Aorta (tissue), 5 donors: ENCODE measurements at regions of chr1 and their contacts with region 1.

Region 1: DNA sequence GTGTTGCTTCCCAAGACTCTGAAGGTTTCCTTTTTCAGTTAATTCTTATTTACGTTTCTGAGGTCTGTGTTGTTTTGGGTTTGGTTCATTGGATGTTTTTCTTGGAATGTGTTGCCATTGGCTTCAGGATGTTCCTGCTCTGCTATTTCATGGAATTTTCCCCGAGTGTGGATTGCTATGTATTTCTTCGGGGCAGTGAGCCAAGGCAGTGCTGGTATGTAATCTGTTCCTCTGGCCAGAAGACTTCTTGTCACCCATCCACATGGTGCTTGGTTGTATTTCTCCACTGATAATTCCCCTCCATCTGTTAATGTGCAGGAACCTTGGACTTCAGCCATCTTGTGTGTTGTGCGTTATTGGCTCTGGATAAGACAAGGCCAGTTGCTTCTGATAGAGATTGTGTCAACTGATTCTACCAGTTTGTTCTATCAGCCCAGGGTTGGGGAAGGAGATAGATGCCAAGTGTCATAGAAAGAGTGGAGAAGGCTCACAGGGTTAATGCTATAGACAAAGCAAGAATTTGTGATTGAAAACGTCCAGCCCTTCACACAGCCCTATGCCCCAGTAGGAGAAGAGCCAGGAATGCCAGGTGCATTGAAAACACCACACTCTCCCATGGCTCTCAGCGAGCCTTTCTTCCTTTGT is 505.2 kb downstream of the PLPP3 start:
- DNase-seq: peak; percentile 85 to 88
- ATAC-seq: peak; percentile 88
- H3K4me3 ChIP-seq: no peak overlapping the region
- H3K27ac ChIP-seq: peak overlapping the region; percentile 57 to 80
- H3K4me1 ChIP-seq: peaks cover 6 to 17% of the 10 kb centered on the region in 2 donors
- H3K27me3 ChIP-seq: no peaks in the 10 kb centered on the region

Region 2: DNA sequence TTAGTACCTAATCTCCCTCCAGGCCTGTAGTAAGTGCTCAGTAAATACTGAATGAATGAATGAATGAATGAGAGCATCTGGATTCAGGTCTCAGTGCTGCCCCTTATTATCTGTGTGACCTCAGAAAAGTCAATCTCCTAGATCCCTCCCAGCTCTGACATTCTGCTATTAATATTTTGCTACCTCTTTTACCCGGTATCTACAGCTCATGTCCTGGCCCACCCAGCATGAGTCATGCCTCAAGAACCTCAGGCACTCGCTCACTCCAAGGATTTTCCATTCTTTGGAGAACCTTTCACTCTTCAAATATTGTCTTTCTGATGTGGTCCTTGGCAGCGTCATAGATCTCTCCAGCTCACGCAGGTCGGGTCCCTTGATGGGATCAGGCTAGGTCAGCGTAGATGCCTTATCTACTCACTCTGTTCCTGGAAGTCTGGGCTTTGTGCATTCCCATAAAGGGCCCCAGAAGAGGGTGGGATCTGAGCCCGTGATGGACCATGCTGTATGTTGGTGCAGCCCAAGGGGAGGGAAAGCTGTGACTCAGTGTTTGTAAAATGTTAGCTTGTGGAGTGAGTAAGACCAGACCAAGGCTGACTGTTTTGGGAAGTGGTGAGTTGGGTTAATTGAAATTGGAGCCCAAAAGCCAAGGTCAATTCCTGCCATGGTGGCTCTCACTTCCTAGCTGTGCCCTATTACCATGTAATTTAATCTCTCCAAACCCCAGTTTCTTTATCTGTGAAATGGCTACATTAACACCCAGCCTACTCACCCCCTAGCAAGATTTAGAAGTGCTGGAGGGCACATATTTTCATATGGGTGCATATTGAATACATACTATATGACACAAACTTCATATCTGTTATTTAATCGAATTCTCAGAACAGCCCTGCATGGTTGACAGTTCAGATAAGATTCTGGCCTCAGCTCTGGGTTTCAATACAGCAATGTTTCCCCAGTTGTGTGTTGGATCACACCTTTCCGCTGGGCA is 644.9 kb before region 1 on chr1:
- intact Hi-C with region 1: loop called in 1 of 2 experiments (anchors 5 kb)
- DNase-seq: peak; percentile 89
- ATAC-seq: peak; percentile 90
- H3K4me3 ChIP-seq: no peak overlapping the region
- H3K27ac ChIP-seq: peak overlapping the region; percentile 71 to 88
- H3K4me1 ChIP-seq: peaks cover 2 to 7% of the 10 kb centered on the region in 2 donors
- H3K27me3 ChIP-seq: no peaks in the 10 kb centered on the region

Region 3: DNA sequence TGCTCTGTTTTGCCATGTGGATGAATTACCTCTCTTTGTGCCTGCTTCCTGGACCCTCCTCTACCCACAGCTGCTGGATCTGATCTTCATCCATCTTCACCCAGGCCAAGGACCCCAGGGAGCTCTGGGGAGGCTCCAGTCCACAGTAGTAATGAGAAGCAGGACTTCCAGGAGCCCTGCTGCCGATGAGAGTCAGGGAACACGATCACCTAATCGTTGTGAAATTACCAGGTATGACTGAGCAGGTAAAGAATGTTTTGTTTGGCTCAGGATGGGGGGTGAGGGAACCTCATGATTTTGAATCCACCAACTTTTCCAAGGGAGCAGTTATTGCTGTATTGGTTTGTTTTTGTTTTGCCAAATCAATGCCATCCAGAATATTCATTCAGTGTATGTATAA is 51.2 kb after region 1 on chr1:
- intact Hi-C with region 1: loop called in 1 of 2 experiments (anchors 5 kb)
- DNase-seq: no peak
- ATAC-seq: no peak
- H3K4me3 ChIP-seq: no peak overlapping the region
- H3K27ac ChIP-seq: no peak overlapping the region
- H3K4me1 ChIP-seq: peaks cover 2% of the 10 kb centered on the region in 2 donors
- H3K27me3 ChIP-seq: no peaks in the 10 kb centered on the region

Region 4: DNA sequence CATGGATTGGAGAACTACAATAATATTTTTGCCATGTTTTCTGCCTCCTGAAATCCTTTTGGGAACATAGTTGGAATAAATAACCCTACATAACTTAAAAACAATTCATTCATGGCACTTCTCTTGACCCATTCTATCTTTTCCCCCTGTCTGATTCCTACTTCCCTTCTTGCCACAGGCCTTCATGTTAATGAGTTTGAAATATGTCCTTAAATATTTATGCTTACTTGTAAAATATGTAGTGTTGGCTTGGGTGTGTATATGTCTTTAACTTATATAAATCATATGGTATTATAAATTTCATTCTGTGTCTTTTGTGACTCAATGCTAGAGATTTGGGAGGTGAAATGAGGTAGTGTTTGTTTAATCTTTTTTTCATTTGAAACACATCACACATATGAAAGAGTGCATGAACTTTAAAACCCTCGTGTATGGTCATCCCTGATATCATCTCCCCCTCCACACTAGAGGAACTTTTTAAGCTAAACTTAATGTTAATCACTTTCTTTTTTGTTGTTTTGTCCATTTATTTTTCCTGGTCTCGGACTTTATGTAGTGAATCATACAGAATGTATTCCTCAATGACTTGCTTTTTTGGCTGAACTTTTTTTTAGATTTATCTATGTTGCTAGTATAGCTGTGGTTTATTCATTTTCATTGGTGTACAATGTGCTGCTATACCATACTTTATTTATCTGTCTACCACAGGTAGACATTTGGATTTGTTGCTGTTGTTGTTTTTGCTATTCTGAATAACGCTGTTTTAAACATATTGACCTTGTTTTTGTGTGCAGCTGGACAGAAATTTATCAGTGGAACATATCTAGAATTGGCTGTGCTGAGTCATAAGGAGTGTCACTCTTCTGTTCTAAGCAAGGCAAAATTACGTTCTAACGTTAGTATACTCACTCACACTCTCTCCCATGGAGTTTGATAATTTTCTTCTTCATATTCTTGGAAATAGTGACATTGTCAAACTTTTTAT is 63.7 kb after region 1 on chr1:
- intact Hi-C with region 1: no loop called
- DNase-seq: no peak
- ATAC-seq: no peak
- H3K4me3 ChIP-seq: no peak overlapping the region
- H3K27ac ChIP-seq: no peak overlapping the region
- H3K4me1 ChIP-seq: no peaks in the 10 kb centered on the region
- H3K27me3 ChIP-seq: no peaks in the 10 kb centered on the region

Region 5: DNA sequence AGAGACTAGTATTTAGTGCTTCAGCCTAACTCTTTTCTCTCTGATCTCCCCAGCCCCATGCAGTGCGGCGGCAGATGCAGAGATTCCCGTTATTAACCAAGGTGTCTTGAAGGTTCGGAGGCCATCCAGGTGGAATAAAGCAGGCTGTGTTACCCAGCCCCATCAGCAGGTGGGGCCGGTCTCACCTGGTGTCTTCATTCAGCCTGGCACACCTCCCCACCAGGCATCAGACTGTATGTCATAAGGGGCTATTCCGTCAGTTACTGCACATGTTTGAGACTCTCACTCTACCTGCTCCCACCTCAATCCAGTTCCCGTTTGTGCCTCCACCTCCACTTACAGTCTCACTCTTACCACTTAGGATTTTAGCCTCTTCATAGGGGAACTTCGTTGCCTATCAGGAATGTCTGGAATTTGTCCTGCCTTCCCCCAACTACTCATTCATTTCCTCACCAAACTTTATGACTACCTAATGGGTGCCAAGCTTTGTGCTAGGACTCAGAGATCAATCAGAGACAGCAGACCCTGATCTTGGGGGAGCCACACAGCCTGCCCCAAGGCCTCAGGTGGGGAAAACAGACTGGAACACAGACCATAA is 335.1 kb after region 1 on chr1:
- intact Hi-C with region 1: loop called in 1 of 2 experiments (anchors 10 kb)
- DNase-seq: no peak
- ATAC-seq: no peak
- H3K4me3 ChIP-seq: no peak overlapping the region
- H3K27ac ChIP-seq: no peak overlapping the region
- H3K4me1 ChIP-seq: peaks cover 0 to 6% of the 10 kb centered on the region in 2 donors
- H3K27me3 ChIP-seq: no peaks in the 10 kb centered on the region